B cell (primary cell): ENCODE measurements at regions of chr17 and their contacts with region 1.

Region 1: DNA sequence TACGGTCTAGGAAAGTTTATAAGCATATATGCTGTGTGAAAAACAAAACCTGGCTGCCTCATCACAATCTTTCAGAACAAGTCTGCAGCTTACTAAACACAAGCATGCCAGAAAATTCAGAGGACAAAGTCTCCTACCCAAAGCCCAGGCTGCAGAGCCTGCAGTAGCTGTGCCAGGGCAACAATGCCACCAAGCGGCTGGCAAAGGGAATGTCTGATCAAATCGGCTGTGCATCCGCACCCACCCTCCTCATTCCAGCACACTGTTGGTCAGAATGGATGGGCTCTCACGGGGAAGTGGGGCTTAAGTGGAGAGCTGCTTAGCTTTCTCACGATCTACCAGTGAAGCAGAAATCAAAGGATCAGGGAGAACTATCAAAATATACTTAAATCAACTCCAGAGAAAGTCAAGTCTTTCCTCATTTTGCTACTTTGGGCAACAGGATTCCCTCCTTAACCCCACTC is 73.5 kb downstream of the CYTH1 start:
- DNase-seq: peak; percentile 65
- ATAC-seq: peak; percentile 46
- H3K4me3 ChIP-seq: no peak overlapping the region
- H3K4me3 Mint-ChIP-seq: peak overlapping the region; percentile 75
- H3K27ac ChIP-seq: peak overlapping the region; percentile 62 to 74
- H3K27ac Mint-ChIP-seq: peak overlapping the region; percentile 87
- H3K4me1 ChIP-seq: peaks cover 55 to 69% of the 10 kb centered on the region in 2 donors
- H3K4me1 Mint-ChIP-seq: peaks cover 68% of the 10 kb centered on the region
- H3K27me3 ChIP-seq: no peaks in the 10 kb centered on the region
- H3K27me3 Mint-ChIP-seq: no peaks in the 10 kb centered on the region
- CTCF ChIP-seq: peak; percentile 77

Region 2: GRCh38 chr17:78497115-78497540 is 211.4 kb before region 1 on chr17:
- CTCF ChIA-PET with region 1: interaction called, 10 read pairs
- POLR2A ChIA-PET with region 1: no interaction called
- intact Hi-C with region 1: loop called (anchors 1 kb)
- DNase-seq: peak; percentile 66
- ATAC-seq: peak; percentile 51
- H3K4me3 ChIP-seq: no peak overlapping the region
- H3K4me3 Mint-ChIP-seq: no peak overlapping the region
- H3K27ac ChIP-seq: no peak overlapping the region
- H3K27ac Mint-ChIP-seq: no peak overlapping the region
- H3K4me1 ChIP-seq: no peaks in the 10 kb centered on the region
- H3K4me1 Mint-ChIP-seq: no peaks in the 10 kb centered on the region
- H3K27me3 ChIP-seq: peaks cover 0 to 3% (median 0%) of the 10 kb centered on the region in 4 experiments
- H3K27me3 Mint-ChIP-seq: peaks cover 8% of the 10 kb centered on the region
- CTCF ChIP-seq: peak; percentile 60

Region 3: DNA sequence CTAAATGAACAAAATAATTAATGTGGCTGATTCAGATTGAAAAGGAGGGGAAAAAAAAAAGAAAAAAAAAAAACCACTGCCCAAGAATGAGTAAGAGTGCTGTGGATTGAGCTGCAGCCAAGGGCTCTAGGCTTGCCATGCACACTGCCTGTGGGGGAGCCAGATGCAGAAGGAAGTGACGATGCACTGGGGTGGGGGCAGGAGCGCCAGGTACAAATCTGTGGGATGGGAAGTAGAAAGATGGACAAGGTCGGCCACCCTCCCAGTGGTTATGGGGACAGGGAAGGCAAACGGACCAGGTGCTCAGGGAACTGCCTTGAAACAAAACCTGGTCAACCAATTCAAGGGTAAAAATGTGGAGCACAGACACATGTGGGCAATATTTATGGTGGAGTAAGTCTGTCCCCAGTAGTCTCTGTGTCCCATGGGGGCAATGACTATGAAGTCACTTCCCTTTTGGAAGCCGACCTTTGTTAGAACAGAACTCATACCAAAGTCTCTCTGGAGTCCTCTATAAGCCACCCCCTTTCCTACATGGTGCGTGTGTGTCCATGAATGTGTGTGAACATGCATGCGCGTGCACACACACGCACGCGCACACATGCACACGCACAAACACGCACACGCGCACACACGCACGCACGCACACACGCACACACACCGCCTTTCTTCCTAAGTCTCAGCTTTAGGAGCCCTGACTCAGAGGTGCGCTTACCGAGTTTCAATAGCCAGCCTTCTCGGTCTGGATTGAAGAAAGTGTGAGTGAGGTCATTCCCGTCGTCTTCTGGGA is 10.8 kb before region 1 on chr17:
- CTCF ChIA-PET with region 1: interaction called, 19 read pairs
- POLR2A ChIA-PET with region 1: interaction called, 10 read pairs
- intact Hi-C with region 1: loop called (anchors 1 kb)
- DNase-seq: peak; percentile 61
- ATAC-seq: peak; percentile 81
- H3K4me3 ChIP-seq: no peak overlapping the region
- H3K4me3 Mint-ChIP-seq: peak overlapping the region; percentile 29
- H3K27ac ChIP-seq: peak overlapping the region; percentile 35 to 58
- H3K27ac Mint-ChIP-seq: peak overlapping the region; percentile 78
- H3K4me1 ChIP-seq: peaks cover 33 to 39% of the 10 kb centered on the region in 2 donors
- H3K4me1 Mint-ChIP-seq: peaks cover 53% of the 10 kb centered on the region
- H3K27me3 ChIP-seq: no peaks in the 10 kb centered on the region
- H3K27me3 Mint-ChIP-seq: no peaks in the 10 kb centered on the region
- CTCF ChIP-seq: no peak

Region 4: GRCh38 chr17:78723001-78723796 is 14.7 kb after region 1 on chr17:
- CTCF ChIA-PET with region 1: interaction called, 52 read pairs
- POLR2A ChIA-PET with region 1: interaction called, 10 read pairs
- intact Hi-C with region 1: loop called (anchors 1 kb)
- DNase-seq: no peak
- ATAC-seq: no peak
- H3K4me3 ChIP-seq: peak overlapping the region in 2 of 5 experiments; percentile 14
- H3K4me3 Mint-ChIP-seq: peak overlapping the region; percentile 67
- H3K27ac ChIP-seq: peak overlapping the region; percentile 73
- H3K27ac Mint-ChIP-seq: peak overlapping the region; percentile 82
- H3K4me1 ChIP-seq: peaks cover 95 to 100% of the 10 kb centered on the region in 2 donors
- H3K4me1 Mint-ChIP-seq: peaks cover 92% of the 10 kb centered on the region
- H3K27me3 ChIP-seq: no peaks in the 10 kb centered on the region
- H3K27me3 Mint-ChIP-seq: no peaks in the 10 kb centered on the region
- CTCF ChIP-seq: no peak

Region 5: DNA sequence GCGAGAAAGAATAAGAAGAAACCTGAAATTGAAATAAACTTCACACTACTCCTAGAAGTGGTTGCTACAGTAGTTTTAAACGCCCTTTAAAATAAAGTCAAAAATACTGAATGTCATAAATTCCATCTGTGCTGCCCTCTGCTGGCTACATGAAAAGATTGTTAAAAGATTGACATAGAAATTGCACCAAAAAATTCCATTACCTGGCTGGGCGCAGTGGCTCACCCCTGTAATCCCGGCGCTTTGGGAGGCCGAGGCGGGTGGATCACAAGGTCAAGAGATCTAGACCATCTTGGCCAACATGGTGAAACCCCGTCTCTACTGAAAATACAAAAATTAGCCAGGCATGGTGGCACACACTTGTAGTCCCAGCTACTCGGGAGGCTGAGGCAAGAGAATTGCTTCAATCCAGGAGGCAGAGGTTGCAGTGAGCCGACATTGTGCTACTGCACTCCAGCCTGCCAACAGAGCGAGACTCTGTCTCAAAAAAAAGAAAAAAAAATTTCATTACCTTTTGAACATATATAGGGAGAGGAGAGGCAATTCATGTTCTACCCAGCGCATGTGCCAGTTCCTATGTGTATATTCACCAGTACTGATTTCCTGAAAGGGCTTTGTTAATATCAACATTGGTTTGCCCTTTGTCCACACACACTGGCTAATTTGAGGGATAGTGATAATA is 37.0 kb after region 1 on chr17:
- CTCF ChIA-PET with region 1: interaction called, 50 read pairs
- POLR2A ChIA-PET with region 1: interaction called, 3 read pairs
- intact Hi-C with region 1: loop called (anchors 1 kb)
- DNase-seq: peak; percentile 70
- ATAC-seq: no peak
- H3K4me3 ChIP-seq: no peak overlapping the region
- H3K4me3 Mint-ChIP-seq: peak overlapping the region; percentile 27
- H3K27ac ChIP-seq: peak overlapping the region; percentile 30 to 91
- H3K27ac Mint-ChIP-seq: peak overlapping the region; percentile 75
- H3K4me1 ChIP-seq: peaks cover 85 to 87% of the 10 kb centered on the region in 2 donors
- H3K4me1 Mint-ChIP-seq: peaks cover 82% of the 10 kb centered on the region
- H3K27me3 ChIP-seq: no peaks in the 10 kb centered on the region
- H3K27me3 Mint-ChIP-seq: no peaks in the 10 kb centered on the region
- CTCF ChIP-seq: peak; percentile 84

Region 6: DNA sequence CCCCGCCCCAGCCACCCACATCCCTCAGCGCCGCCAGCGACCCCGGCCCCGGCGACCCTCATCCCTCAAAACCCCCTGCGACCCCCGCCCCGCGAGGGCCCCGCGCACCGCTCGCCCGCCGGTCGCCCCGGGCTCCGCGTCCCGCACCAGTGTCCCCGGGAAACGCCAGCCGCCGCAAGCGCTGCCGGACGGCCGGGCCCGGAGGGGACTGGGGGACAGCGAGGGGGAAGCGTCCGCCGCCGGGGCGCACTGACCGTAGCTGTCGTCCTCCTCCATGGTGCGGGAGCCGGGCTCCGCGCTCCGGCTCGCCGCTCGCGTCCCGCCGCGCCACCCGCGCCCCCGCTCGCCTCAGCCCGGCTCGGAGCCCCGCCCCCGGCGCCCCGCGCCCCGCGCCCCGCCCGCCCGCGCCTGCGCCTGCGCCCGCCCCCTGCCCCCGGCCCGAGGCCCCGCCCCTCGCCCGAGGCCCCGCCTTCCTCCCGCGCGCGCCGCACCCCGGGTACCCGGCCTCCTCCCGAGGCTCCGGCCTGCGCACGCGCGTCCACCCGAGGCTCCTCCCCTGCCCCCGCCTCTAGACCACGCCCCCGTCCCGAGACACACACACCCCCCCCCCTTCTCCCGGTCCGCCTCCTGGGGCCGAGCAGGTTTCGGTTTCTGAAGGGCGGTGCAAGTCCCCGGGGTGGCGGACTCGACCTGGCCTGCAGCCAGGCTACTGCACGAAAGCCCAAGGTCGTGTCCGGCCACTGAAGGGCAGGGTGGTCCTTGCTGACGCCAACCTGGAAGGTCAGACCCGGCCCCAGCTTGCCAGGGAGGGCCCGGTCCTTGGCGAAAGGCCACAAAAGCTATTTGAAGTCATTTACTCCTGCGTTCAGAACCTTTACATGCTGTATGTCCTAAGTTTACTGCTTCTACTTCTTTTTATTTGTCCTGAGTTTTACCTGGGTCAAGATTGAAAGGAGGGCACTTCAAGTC is 73.7 kb after region 1 on chr17 and contains the start of gene CYTH1:
- CTCF ChIA-PET with region 1: interaction called, 7 read pairs
- POLR2A ChIA-PET with region 1: interaction called, 10 read pairs
- intact Hi-C with region 1: loop called (anchors 5 kb)
- DNase-seq: peak; percentile 96
- ATAC-seq: peak; percentile 83
- H3K4me3 ChIP-seq: peak within 1 kb of the TSS; percentile 78 to 95 (median 89)
- H3K4me3 Mint-ChIP-seq: peak within 1 kb of the TSS; percentile 88
- H3K27ac ChIP-seq: peak within 1 kb of the TSS; percentile 86 to 88
- H3K27ac Mint-ChIP-seq: peak within 1 kb of the TSS; percentile 96
- H3K4me1 ChIP-seq: peaks cover 33 to 44% of the 10 kb centered on the region in 2 donors
- H3K4me1 Mint-ChIP-seq: peaks cover 36% of the 10 kb centered on the region
- H3K27me3 ChIP-seq: no peaks in the 10 kb centered on the region
- H3K27me3 Mint-ChIP-seq: no peaks in the 10 kb centered on the region
- CTCF ChIP-seq: no peak
- total RNA-seq, gene CYTH1: 353 and 368 TPM in 2 replicates

Region 7: DNA sequence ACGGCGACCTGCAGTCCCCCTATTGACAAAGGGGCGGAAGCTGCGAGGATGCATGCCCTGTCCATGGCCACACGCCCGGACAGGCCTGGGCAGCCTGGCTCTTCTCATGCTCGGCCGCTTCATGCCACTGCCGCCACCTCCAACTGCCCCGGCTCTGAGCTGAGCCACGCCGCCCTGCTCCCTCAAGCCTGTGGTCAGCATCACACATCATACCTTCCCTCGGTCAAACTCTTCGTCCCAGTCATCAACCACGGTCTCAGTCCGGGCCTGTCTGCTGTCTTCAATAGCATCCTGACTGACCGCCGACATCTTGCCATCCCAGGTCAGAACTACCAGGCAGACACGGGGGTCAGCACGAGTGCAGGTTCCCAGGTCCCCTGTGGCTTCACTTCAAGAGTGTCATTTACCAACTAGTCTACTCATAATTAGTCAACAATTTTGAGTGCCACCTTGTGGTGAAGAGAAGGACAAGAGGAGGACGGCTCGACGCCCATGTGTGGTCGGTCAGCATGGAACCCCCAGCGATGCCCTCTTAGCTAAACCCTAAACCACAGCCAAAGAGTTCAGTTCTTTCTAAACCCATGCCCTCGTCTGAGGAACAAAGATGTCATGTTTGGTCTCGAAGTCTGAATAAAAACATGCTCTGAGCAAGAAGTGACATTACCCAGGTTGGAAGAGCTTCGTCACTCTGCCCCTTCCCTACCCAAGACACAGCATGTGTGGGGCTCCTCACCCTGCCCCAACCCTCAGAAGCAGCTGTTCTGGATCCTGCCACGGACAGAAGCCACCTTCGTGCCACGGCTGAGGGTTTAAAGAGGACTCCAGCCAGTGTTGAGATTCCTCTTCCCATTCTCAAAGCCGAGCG is 90.4 kb after region 1 on chr17:
- CTCF ChIA-PET with region 1: interaction called, 16 read pairs
- POLR2A ChIA-PET with region 1: no interaction called
- intact Hi-C with region 1: loop called (anchors 5 kb)
- DNase-seq: peak; percentile 68
- ATAC-seq: peak; percentile 56
- H3K4me3 ChIP-seq: no peak overlapping the region
- H3K4me3 Mint-ChIP-seq: no peak overlapping the region
- H3K27ac ChIP-seq: no peak overlapping the region
- H3K27ac Mint-ChIP-seq: peak overlapping the region; percentile 57
- H3K4me1 ChIP-seq: peaks cover 6 to 8% of the 10 kb centered on the region in 2 donors
- H3K4me1 Mint-ChIP-seq: peaks cover 12% of the 10 kb centered on the region
- H3K27me3 ChIP-seq: no peaks in the 10 kb centered on the region
- H3K27me3 Mint-ChIP-seq: no peaks in the 10 kb centered on the region
- CTCF ChIP-seq: peak; percentile 59